AG04449 (cell line): ENCODE measurements at regions of chr9 and their contacts with region 1.

Region 1: GRCh38 chr9:125407974-125408900 is 146.6 kb downstream of the GAPVD1 start:
- DNase-seq: no peak
- H3K4me3 ChIP-seq: peak overlapping the region; percentile 67
- CTCF ChIP-seq: peak; percentile 93

Region 2: GRCh38 chr9:125360601-125361000 is 47.6 kb before region 1 on chr9:
- CTCF ChIA-PET with region 1: no interaction called
- POLR2A ChIA-PET with region 1: no interaction called
- DNase-seq: no peak
- H3K4me3 ChIP-seq: no peak overlapping the region
- CTCF ChIP-seq: no peak

Region 3: DNA sequence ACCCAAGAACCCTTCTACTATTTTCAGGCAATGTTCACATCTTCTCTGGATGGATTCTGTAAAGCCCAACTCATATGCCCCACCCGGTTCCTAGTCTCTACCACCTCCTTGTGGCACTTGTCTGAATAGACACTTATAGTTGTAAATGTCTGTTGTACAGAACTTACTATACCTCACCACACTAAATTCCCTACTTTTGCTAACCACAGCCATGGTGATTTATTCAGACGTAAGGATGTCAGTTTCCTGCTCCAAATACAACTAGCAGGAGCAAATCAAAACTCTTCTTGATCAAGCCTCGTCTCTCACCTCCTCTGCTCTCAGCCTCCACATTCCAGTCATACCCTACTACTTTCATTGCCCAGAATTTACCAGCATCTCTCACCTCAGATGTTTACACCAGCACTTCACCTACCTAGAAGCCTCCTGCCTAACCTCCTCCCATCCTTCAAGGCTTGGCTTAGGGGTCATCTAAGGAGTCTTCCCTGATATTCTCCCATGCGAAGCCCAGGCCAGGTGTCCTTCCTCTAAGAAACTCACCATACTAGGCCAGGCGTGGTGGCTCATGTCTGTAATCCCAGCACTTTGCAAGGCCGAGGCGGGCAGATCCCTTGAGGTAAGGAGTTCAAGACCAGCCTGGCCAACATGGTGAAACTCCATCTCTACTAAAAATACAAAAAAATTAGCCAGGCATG is 223.3 kb after region 1 on chr9:
- CTCF ChIA-PET with region 1: interaction called, 11 read pairs
- POLR2A ChIA-PET with region 1: no interaction called
- DNase-seq: no peak
- H3K4me3 ChIP-seq: no peak overlapping the region
- CTCF ChIP-seq: peak; percentile 54

Region 4: DNA sequence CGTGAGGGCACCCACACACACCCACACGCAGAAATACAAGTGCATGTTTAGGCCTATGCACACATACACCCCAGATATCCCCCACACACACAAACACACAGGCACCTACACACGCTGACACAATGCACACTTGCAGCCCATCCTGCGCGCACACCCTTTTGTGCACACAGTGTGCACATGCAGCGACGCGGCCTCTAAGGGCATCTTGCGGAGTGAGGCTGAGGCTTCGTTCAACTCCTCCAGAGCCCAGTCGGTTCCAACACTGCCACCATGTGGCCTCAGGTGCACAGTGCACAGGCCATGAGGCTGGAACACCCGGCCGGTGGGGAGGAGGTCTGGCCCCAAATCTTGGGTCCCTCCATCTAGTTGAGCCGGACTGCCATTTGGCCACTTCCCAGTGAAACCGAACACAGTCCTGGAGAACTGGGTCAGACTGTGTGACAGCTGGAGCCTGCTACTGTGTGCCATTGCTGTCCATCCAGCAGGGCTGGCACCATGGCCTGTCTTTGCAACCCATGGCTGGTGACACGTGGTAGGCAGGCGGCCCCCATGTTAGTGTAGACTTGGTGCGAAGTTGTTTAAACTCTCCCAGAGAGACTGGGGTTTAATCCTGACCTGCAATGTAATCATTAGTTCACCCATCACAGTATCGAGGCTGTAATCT is 820.7 kb after region 1 on chr9:
- CTCF ChIA-PET with region 1: interaction called, 40 read pairs
- POLR2A ChIA-PET with region 1: no interaction called
- DNase-seq: no peak
- H3K4me3 ChIP-seq: no peak overlapping the region
- CTCF ChIP-seq: peak; percentile 96